ENCODE measurements at regions of chr9 and their contacts with region 1.

Region 1: GRCh38 chr9:111525056-111525977 is at the start of gene ZNF483:
- DNase-seq: peak; percentile 72
- H3K4me3 ChIP-seq: peak within 1 kb of the TSS; percentile 78 to 80
- H3K27ac ChIP-seq: peak within 1 kb of the TSS; percentile 77 to 81
- H3K4me1 ChIP-seq: no peaks in the 10 kb centered on the region
- H3K27me3 ChIP-seq: no peaks in the 10 kb centered on the region
- CTCF ChIP-seq: peak in 1 of 4 experiments; percentile 5
- POLR2A ChIP-seq: peak; percentile 54
- total RNA-seq, gene ZNF483: 12.8 to 30.4 TPM

Region 2: GRCh38 chr9:111483862-111484571 is 41.3 kb before region 1 on chr9 and contains the start of gene ECPAS:
- intact Hi-C with region 1: loop called (anchors 5 kb)
- DNase-seq: peak; percentile 75
- H3K4me3 ChIP-seq: peak within 1 kb of the TSS; percentile 75 to 85
- H3K27ac ChIP-seq: peak within 1 kb of the TSS; percentile 98 to 99
- H3K4me1 ChIP-seq: peaks cover 4% of the 10 kb centered on the region
- H3K27me3 ChIP-seq: no peaks in the 10 kb centered on the region
- CTCF ChIP-seq: no peak
- POLR2A ChIP-seq: peak; percentile 52
- total RNA-seq, gene ECPAS: 87.8 to 103 TPM

Region 3: GRCh38 chr9:111648066-111648465 is 122.7 kb after region 1 on chr9:
- intact Hi-C with region 1: no loop called
- DNase-seq: no peak
- H3K4me3 ChIP-seq: no peak overlapping the region
- H3K27ac ChIP-seq: no peak overlapping the region
- H3K4me1 ChIP-seq: no peaks in the 10 kb centered on the region
- H3K27me3 ChIP-seq: no peaks in the 10 kb centered on the region
- CTCF ChIP-seq: no peak
- POLR2A ChIP-seq: no peak